Endothelial cell of umbilical vein (primary cell): ENCODE measurements at regions of chr5 and their contacts with region 1.

Region 1: GRCh38 chr5:112860929-112861637 is at the start of gene SRP19:
- DNase-seq: peak; percentile 97
- H3K4me3 ChIP-seq: peak within 1 kb of the TSS; percentile 63 to 98 (median 97)
- H3K27ac ChIP-seq: peak within 1 kb of the TSS; percentile 81
- H3K4me1 ChIP-seq: peaks cover 18% of the 10 kb centered on the region
- H3K27me3 ChIP-seq: no peaks in the 10 kb centered on the region
- CTCF ChIP-seq: no peak
- POLR2A ChIP-seq: peak; percentile 92
- total RNA-seq, gene SRP19: 69.2 and 69.4 TPM in 2 replicates

Region 2: DNA sequence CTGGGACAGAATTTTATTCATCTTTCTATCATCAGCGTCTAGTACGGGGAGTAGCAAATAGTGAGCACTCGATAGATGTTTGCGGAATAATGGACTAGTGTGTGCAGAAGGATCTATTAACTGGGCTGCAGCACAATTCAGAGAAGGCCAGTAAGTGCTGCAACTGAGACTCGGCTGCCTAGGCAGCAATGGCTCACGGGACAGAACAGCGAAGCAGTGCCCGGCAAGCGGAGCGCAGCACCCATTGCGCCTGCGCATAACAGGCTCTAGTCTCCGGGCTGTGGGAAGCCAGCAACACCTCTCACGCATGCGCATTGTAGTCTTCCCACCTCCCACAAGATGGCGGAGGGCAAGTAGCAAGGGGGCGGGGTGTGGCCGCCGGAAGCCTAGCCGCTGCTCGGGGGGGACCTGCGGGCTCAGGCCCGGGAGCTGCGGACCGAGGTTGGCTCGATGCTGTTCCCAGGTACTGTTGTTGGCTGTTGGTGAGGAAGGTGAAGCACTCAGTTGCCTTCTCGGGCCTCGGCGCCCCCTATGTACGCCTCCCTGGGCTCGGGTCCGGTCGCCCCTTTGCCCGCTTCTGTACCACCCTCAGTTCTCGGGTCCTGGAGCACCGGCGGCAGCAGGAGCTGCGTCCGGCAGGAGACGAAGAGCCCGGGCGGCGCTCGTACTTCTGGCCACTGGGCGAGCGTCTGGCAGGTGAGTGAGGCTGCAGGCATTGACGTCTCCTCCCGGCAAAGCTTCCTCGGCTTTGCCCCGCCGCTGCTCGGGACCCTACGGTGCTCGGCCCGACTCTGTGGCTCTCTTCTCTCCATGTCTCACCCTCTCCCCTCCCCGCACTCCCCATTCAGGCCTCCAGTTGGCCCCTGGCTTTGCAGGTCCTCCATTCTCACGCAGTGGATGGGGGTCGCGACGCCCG is 153.6 kb before region 1 on chr5:
- CTCF ChIA-PET with region 1: no interaction called
- POLR2A ChIA-PET with region 1: no interaction called
- dilution Hi-C with region 1: no loop called
- intact Hi-C with region 1: loop called (anchors 1 kb)
- DNase-seq: peak; percentile 98
- H3K4me3 ChIP-seq: peak overlapping the region; percentile 19 to 86 (median 74)
- H3K27ac ChIP-seq: peak overlapping the region; percentile 40
- H3K4me1 ChIP-seq: peaks cover 26% of the 10 kb centered on the region
- H3K27me3 ChIP-seq: no peaks in the 10 kb centered on the region
- CTCF ChIP-seq: no peak
- POLR2A ChIP-seq: peak; percentile 97

Region 3: GRCh38 chr5:112876362-112876761 is 15.3 kb after region 1 on chr5:
- CTCF ChIA-PET with region 1: no interaction called
- POLR2A ChIA-PET with region 1: no interaction called
- dilution Hi-C with region 1: no loop called
- intact Hi-C with region 1: loop called (anchors 2 kb)
- DNase-seq: no peak
- H3K4me3 ChIP-seq: no peak overlapping the region
- H3K27ac ChIP-seq: no peak overlapping the region
- H3K4me1 ChIP-seq: peaks cover 4% of the 10 kb centered on the region
- H3K27me3 ChIP-seq: no peaks in the 10 kb centered on the region
- CTCF ChIP-seq: no peak
- POLR2A ChIP-seq: no peak

Region 4: DNA sequence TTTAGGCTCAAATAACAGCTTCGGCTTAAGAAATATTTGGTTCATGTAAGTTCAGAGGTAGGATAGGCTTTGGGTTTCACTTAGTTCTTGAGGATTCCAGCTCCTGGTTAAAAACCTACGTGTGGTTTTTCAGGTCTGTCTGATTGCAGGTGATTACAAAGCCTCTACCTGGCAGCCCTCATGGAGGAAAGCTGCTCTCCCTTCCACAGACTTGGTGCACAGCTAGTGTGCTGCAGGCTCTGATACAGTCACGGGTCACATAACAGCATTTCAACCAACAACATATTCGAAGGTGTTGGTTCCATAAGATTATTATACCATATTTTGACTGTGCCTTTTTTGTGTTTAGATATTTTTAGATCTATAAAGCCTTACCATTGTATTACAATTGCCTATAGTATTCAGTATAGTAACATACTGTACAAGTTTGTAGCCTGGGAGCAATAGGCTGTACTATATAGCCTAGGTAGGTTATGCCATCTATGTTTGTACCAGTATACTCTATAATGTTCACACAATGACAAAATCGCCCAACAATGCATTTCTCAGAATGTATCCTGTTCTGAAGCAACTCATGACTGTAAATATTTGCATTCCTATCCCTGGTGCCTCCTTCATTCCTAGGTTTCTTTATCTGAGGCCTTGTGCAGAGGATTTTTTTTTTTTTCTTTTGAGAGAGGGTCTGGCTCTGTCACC is 107.5 kb after region 1 on chr5:
- CTCF ChIA-PET with region 1: no interaction called
- POLR2A ChIA-PET with region 1: no interaction called
- dilution Hi-C with region 1: no loop called
- intact Hi-C with region 1: loop called (anchors 2 kb)
- DNase-seq: no peak
- H3K4me3 ChIP-seq: no peak overlapping the region
- H3K27ac ChIP-seq: no peak overlapping the region
- H3K4me1 ChIP-seq: peaks cover 4% of the 10 kb centered on the region
- H3K27me3 ChIP-seq: no peaks in the 10 kb centered on the region
- CTCF ChIP-seq: no peak
- POLR2A ChIP-seq: no peak